Caco-2 (cell line): ENCODE measurements at regions of chr6 and their contacts with region 1.

Region 1: GRCh38 chr6:27687154-27688013 is 214.5 kb upstream of the ZNF184 start:
- DNase-seq: peak; percentile 85 to 87
- H3K4me3 ChIP-seq: peak overlapping the region; percentile 51
- H3K4me3 Mint-ChIP-seq: peak overlapping the region; percentile 78
- H3K27ac Mint-ChIP-seq: peak overlapping the region; percentile 60
- H3K4me1 ChIP-seq: no peaks in the 10 kb centered on the region
- H3K4me1 Mint-ChIP-seq: peaks cover 8% of the 10 kb centered on the region
- H3K27me3 ChIP-seq: no peaks in the 10 kb centered on the region
- H3K27me3 Mint-ChIP-seq: no peaks in the 10 kb centered on the region
- CTCF ChIP-seq: peak; percentile 63 to 81

Region 2: DNA sequence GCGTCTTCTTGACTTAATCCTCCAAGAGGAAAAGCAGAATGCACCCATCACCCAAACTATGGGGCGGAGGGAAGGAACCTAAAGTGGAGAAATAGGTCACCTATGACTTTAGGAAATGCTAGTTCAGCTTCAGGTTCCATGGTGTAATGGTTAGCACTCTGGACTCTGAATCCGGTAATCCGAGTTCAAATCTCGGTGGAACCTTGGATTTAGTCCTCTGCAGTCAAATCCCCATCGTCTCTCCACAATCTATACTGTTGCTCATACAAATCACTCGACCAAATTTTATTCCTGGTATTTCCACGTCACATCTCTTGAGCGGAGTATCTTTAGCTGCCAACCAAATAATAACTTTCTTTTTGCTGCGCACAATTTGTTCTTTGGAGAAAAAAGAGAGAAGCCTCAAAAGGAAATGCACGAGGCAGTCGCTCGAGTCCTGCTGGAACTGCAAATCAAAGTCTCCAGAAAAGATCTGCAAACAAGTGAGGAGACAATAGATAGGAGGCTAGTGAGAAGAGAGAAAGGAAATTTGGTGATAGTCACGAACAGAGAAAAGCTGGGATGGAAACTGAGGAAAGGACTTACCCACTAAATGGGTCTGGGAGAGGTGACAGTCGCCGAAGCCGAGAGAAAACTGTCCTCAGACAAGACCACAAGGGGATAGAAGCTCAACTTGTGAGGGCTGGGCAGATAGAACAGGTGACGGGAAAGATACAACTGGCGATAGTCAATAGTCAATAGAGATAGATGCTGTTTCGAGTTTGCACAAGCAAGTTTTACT is 391.9 kb before region 1 on chr6:
- CTCF ChIA-PET with region 1: no interaction called
- POLR2A ChIA-PET with region 1: no interaction called
- intact Hi-C with region 1: loop called (anchors 5 kb)
- DNase-seq: peak; percentile 59 to 71
- H3K4me3 ChIP-seq: peak overlapping the region; percentile 41
- H3K4me3 Mint-ChIP-seq: peak overlapping the region; percentile 97
- H3K27ac Mint-ChIP-seq: peak overlapping the region; percentile 77
- H3K4me1 ChIP-seq: 0 out of 2 replicates have a peak, but pooled peaks cover 5% of the 10 kb centered on the region
- H3K4me1 Mint-ChIP-seq: peaks cover 16% of the 10 kb centered on the region
- H3K27me3 ChIP-seq: no peaks in the 10 kb centered on the region
- H3K27me3 Mint-ChIP-seq: peaks cover 7% of the 10 kb centered on the region
- CTCF ChIP-seq: no peak

Region 3: GRCh38 chr6:27492631-27493190 is 194.7 kb before region 1 on chr6:
- CTCF ChIA-PET with region 1: interaction called, 12 read pairs
- POLR2A ChIA-PET with region 1: no interaction called
- intact Hi-C with region 1: no loop called
- DNase-seq: no peak
- H3K4me3 ChIP-seq: no peak overlapping the region
- H3K4me3 Mint-ChIP-seq: no peak overlapping the region
- H3K27ac Mint-ChIP-seq: no peak overlapping the region
- H3K4me1 ChIP-seq: no peaks in the 10 kb centered on the region
- H3K4me1 Mint-ChIP-seq: peaks cover 6% of the 10 kb centered on the region
- H3K27me3 ChIP-seq: no peaks in the 10 kb centered on the region
- H3K27me3 Mint-ChIP-seq: no peaks in the 10 kb centered on the region
- CTCF ChIP-seq: no peak

Region 4: GRCh38 chr6:27630727-27631608 is 56.4 kb before region 1 on chr6:
- CTCF ChIA-PET with region 1: no interaction called
- POLR2A ChIA-PET with region 1: no interaction called
- intact Hi-C with region 1: loop called (anchors 1 kb)
- DNase-seq: peak; percentile 80 to 82
- H3K4me3 ChIP-seq: peak overlapping the region; percentile 51
- H3K4me3 Mint-ChIP-seq: peak overlapping the region; percentile 90
- H3K27ac Mint-ChIP-seq: peak overlapping the region; percentile 88
- H3K4me1 ChIP-seq: peaks cover 3% of the 10 kb centered on the region; the same call in 1 of the 2 replicates
- H3K4me1 Mint-ChIP-seq: no peaks in the 10 kb centered on the region
- H3K27me3 ChIP-seq: no peaks in the 10 kb centered on the region
- H3K27me3 Mint-ChIP-seq: no peaks in the 10 kb centered on the region
- CTCF ChIP-seq: peak; percentile 24 to 48

Region 5: DNA sequence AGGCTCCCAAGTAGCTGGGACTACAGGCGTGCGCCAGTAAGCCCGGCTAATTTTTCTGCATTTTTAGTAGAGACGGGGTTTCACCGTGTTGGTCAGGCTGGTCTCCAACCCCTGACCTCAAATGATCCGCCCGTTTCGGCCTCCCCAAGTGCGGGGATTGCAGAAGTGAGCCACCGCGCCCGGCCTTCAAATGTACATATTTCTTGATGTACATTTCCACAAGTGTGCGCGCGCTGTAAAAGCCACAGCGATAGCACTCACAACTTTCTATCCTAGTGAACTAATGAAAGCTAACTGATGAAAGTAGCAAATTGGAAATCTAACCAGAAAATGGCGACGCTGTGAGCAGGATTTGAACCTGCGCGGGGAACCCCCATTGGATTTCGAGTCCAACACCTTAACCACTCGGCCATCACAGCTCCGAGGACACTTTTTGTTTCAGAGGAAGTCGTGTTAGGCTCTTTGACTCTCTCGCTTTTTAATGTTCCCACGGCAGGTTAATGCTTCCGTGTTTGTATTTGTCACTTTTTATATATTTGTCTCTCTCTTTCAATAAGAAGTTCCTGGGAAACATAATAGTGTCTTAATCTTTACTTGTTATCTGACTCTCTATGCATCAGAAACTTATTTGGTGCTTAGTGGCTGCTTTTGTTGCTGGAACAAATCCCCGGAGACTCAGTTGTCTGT is 15.1 kb before region 1 on chr6:
- CTCF ChIA-PET with region 1: interaction called, 3 read pairs
- POLR2A ChIA-PET with region 1: no interaction called
- intact Hi-C with region 1: loop called (anchors 1 kb)
- DNase-seq: peak; percentile 79 to 87
- H3K4me3 ChIP-seq: peak overlapping the region; percentile 18
- H3K4me3 Mint-ChIP-seq: peak overlapping the region; percentile 75
- H3K27ac Mint-ChIP-seq: peak overlapping the region; percentile 46
- H3K4me1 ChIP-seq: peaks cover 4% of the 10 kb centered on the region; the same call in 1 of the 2 replicates
- H3K4me1 Mint-ChIP-seq: peaks cover 30% of the 10 kb centered on the region
- H3K27me3 ChIP-seq: no peaks in the 10 kb centered on the region
- H3K27me3 Mint-ChIP-seq: no peaks in the 10 kb centered on the region
- CTCF ChIP-seq: no peak

Region 6: GRCh38 chr6:27761391-27761790 is 74.0 kb after region 1 on chr6:
- CTCF ChIA-PET with region 1: no interaction called
- POLR2A ChIA-PET with region 1: no interaction called
- intact Hi-C with region 1: no loop called
- DNase-seq: no peak
- H3K4me3 ChIP-seq: no peak overlapping the region
- H3K4me3 Mint-ChIP-seq: no peak overlapping the region
- H3K27ac Mint-ChIP-seq: no peak overlapping the region
- H3K4me1 ChIP-seq: no peaks in the 10 kb centered on the region
- H3K4me1 Mint-ChIP-seq: no peaks in the 10 kb centered on the region
- H3K27me3 ChIP-seq: no peaks in the 10 kb centered on the region
- H3K27me3 Mint-ChIP-seq: no peaks in the 10 kb centered on the region
- CTCF ChIP-seq: no peak

Region 7: DNA sequence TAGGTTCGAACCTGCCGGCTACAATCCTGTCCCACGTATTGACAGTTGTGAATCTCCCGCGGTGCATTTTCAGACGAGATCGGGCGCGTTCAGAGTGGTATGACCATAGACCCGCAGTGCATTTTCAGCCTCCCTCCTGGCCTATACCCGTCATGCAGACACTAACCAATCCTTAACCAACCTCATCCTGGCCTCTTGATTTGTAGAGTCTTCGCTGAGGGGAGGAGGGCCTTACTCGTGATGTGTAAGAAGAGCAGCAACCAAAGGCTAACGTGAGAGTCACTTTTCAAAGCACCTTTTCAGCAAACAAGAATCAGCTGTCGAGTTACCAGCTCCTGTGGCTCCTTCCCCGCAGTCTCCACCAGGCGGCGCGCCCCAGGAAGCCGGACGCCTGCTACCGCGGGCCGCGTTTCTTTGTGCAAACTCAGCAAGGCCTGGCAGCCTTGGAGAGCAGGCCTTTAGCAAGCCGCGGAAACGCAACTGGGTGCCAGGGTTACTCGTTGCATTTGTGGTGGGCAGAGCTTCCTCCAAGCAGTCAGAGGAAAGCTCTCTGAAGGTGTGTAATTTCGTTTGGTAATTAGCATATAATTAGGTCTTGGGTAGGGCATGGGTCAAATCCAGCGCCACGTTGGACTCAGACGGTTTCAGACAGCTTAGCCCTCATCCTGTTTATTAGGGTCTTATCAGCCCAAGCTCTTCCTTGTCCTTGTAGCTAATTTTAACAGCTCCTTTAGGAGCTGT is 85.0 kb after region 1 on chr6:
- CTCF ChIA-PET with region 1: no interaction called
- POLR2A ChIA-PET with region 1: no interaction called
- intact Hi-C with region 1: no loop called
- DNase-seq: peak; percentile 78 to 86
- H3K4me3 ChIP-seq: peak overlapping the region; percentile 4; the same call in 1 of the 2 replicates
- H3K4me3 Mint-ChIP-seq: peak overlapping the region; percentile 59
- H3K27ac Mint-ChIP-seq: peak overlapping the region; percentile 51
- H3K4me1 ChIP-seq: peaks cover 19% of the 10 kb centered on the region
- H3K4me1 Mint-ChIP-seq: peaks cover 23% of the 10 kb centered on the region
- H3K27me3 ChIP-seq: no peaks in the 10 kb centered on the region
- H3K27me3 Mint-ChIP-seq: no peaks in the 10 kb centered on the region
- CTCF ChIP-seq: peak; percentile 76 to 90